K562 (cell line): ENCODE measurements at regions of chrX and their contacts with region 1.

Region 1: DNA sequence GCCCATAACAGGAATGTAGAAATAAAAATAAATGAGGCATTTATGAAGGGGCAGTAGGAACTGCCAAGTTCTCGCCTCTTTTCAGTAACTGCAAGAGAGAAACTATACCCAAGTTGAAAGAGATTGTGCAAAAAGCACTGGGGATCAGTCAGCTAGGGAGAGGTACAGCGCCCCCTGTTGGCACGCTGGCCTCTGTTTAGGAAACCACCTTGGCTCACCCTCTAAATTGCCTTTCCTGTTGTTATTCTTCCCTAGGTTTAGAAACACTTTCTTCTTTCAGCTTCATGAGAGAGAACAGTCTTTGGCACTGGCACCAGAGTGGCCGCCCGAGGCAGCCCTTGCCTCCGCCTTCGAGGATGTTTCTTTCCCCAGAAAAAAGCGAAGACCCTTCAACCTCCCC is 348.5 kb downstream of the MID1IP1 start:
- DNase-seq: peak; percentile 44 to 62 (median 49)
- ATAC-seq: peak; percentile 81
- H3K4me3 ChIP-seq: no peak overlapping the region
- H3K27ac ChIP-seq: no peak overlapping the region
- H3K4me1 ChIP-seq: peaks cover 0 to 10% of the 10 kb centered on the region in 2 experiments; a peak in 3 of 5 replicates
- H3K27me3 ChIP-seq: 0 out of 5 replicates have a peak, but pooled peaks cover 0 to 2% of the 10 kb centered on the region in 2 experiments
- CTCF ChIP-seq: peak; percentile 65 to 68 (median 67)
- EP300 ChIP-seq: no peak
- POLR2A ChIP-seq: no peak
- RAD21 ChIP-seq: peak; percentile 47 to 67

Region 2: GRCh38 chrX:38636949-38637819 is 512.6 kb before region 1 on chrX:
- CTCF ChIA-PET with region 1: no interaction called
- POLR2A ChIA-PET with region 1: no interaction called
- in situ Hi-C with region 1: no loop called
- intact Hi-C with region 1: loop called (anchors 1 kb)
- DNase-seq: no peak
- ATAC-seq: no peak
- H3K4me3 ChIP-seq: no peak overlapping the region
- H3K27ac ChIP-seq: no peak overlapping the region; the same call in 2 of the 3 replicates
- H3K4me1 ChIP-seq: peaks cover 8 to 69% of the 10 kb centered on the region in 2 experiments
- H3K27me3 ChIP-seq: no peaks in the 10 kb centered on the region
- CTCF ChIP-seq: no peak
- EP300 ChIP-seq: no peak
- POLR2A ChIP-seq: no peak
- RAD21 ChIP-seq: no peak

Region 3: DNA sequence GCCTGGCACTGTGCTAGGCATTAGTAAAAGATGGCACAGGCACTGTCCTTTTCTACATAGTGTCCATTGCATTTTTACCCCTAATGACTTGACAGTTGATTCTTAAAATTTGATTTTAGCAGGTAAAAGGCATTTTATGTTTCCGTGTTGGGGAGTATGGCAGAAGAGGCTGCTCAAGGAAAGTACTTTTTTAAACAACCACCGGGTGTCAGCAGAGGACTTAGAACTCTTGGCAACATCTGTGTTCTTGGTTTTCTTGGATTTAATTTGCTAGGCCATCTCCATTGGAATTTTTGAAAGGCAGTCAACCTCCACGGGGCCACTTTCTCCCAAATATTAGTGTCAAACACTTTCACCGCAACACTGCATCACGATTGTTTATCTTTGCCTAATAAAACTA is 485.5 kb before region 1 on chrX:
- CTCF ChIA-PET with region 1: interaction called, 4 read pairs
- POLR2A ChIA-PET with region 1: no interaction called
- in situ Hi-C with region 1: no loop called
- intact Hi-C with region 1: loop called (anchors 1 kb)
- DNase-seq: peak; percentile 33 to 64 (median 38)
- ATAC-seq: peak; percentile 84
- H3K4me3 ChIP-seq: no peak overlapping the region
- H3K27ac ChIP-seq: no peak overlapping the region
- H3K4me1 ChIP-seq: peaks cover 0 to 7% of the 10 kb centered on the region in 2 experiments; a peak in 2 of 5 replicates
- H3K27me3 ChIP-seq: no peaks in the 10 kb centered on the region
- CTCF ChIP-seq: peak; percentile 52 to 59 (median 55); a peak in 5 of 6 replicates
- EP300 ChIP-seq: no peak
- POLR2A ChIP-seq: no peak
- RAD21 ChIP-seq: peak; percentile 63 to 74

Region 4: DNA sequence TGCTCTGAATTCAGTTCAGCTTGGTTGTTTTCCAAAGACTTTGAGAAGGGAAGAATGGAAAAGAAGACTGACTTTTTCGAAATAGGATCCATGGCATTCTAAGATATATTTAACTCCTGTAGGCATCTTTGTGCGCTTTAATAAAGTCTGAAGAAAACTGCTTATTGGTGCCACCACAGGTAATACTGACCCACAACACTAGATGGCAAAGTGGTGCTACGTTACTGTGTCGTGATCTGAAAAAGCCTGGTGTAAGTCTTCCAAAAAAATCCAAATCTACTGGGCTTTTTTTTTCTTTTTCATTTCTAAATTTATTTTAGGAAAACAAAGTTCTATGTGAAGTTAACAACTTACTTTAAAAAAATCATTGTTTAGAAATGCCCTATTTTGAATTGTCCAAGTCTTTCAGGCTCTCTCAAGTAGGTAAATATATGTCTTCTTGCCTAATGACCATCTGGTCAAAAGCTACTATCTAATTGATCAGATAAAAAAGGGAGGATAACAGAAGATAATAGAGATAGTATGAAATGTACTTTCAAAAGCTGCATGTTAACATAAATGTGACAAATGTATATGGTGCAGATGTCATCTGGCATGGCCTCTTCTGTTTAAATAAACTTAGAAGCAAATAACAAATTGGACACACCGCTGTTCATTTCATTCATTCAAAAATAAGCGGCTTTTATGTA is 395.5 kb before region 1 on chrX:
- CTCF ChIA-PET with region 1: interaction called, 6 read pairs
- POLR2A ChIA-PET with region 1: no interaction called
- in situ Hi-C with region 1: loop called (anchors 5 kb)
- intact Hi-C with region 1: loop called (anchors 2 kb)
- DNase-seq: peak; percentile 25 to 65 (median 39)
- ATAC-seq: peak; percentile 86
- H3K4me3 ChIP-seq: no peak overlapping the region
- H3K27ac ChIP-seq: no peak overlapping the region
- H3K4me1 ChIP-seq: no peaks in the 10 kb centered on the region; a peak in 2 of 5 replicates
- H3K27me3 ChIP-seq: no peaks in the 10 kb centered on the region; a peak in 2 of 5 replicates
- CTCF ChIP-seq: peak; percentile 61 to 71 (median 63)
- EP300 ChIP-seq: no peak
- POLR2A ChIP-seq: no peak
- RAD21 ChIP-seq: peak; percentile 78 to 79

Region 5: GRCh38 chrX:38768079-38768478 is 381.7 kb before region 1 on chrX:
- CTCF ChIA-PET with region 1: no interaction called
- POLR2A ChIA-PET with region 1: no interaction called
- in situ Hi-C with region 1: no loop called
- intact Hi-C with region 1: loop called (anchors 1 kb)
- DNase-seq: peak in 1 of 4 experiments; percentile 23
- ATAC-seq: 0 out of 3 replicates have a peak, but pooled peaks have one; percentile 17
- H3K4me3 ChIP-seq: no peak overlapping the region
- H3K27ac ChIP-seq: no peak overlapping the region
- H3K4me1 ChIP-seq: peaks cover 0 to 5% of the 10 kb centered on the region in 2 experiments; a peak in 2 of 5 replicates
- H3K27me3 ChIP-seq: no peaks in the 10 kb centered on the region
- CTCF ChIP-seq: peak; percentile 38 to 62 (median 46); a peak in 4 of 6 replicates
- EP300 ChIP-seq: no peak
- POLR2A ChIP-seq: no peak
- RAD21 ChIP-seq: peak; percentile 51 to 71

Region 6: DNA sequence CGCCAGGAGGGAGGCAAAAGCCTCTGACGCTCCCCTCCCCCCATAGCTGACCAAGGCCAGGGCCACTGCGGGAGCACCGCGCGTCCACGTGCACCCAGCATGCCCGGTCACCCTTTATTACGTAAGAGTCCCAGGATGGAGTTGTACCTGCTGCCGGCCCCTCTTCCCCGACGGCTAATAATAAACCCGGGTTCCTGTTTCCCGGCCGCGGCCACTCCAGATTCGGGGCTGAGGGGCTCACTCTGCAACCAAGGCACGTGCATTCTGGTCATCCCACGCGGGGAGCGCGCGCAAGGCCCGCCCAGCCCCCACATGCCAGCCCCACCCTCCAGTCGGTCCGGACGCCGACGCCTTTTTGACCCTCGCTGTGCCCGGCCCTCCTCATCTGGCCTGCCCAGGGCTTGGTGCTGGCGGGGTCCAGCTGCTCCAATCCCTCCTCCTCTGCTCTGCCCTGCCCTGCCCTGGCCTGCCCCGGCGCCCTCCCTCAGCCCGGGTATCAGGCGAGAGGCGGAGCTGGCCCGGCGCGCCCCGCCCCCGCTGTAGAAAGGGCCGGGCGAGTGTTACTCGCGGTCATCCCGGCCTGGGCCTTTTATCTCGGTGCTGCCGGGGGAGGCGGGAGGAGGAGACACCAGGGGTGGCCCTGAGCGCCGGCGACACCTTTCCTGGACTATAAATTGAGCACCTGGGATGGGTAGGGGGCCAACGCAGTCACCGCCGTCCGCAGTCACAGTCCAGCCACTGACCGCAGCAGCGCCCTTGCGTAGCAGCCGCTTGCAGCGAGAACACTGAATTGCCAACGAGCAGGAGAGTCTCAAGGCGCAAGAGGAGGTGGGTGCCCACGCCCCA is 346.0 kb before region 1 on chrX:
- CTCF ChIA-PET with region 1: no interaction called
- POLR2A ChIA-PET with region 1: interaction called, 3 read pairs
- in situ Hi-C with region 1: no loop called
- intact Hi-C with region 1: loop called (anchors 5 kb)
- DNase-seq: peak; percentile 75 to 91 (median 84)
- ATAC-seq: peak; percentile 73
- H3K4me3 ChIP-seq: peak overlapping the region; percentile 86
- H3K27ac ChIP-seq: peak overlapping the region; percentile 96
- H3K4me1 ChIP-seq: peaks cover 19 to 34% of the 10 kb centered on the region in 2 experiments
- H3K27me3 ChIP-seq: no peaks in the 10 kb centered on the region
- CTCF ChIP-seq: 0 out of 6 replicates have a peak, but pooled peaks of 1 of the 3 experiments have one; percentile 1
- EP300 ChIP-seq: peak; percentile 15; the same call in 1 of the 2 replicates
- POLR2A ChIP-seq: peak; percentile 96
- RAD21 ChIP-seq: 0 out of 4 replicates have a peak, but pooled peaks of 1 of the 2 experiments have one; percentile 6

Region 7: DNA sequence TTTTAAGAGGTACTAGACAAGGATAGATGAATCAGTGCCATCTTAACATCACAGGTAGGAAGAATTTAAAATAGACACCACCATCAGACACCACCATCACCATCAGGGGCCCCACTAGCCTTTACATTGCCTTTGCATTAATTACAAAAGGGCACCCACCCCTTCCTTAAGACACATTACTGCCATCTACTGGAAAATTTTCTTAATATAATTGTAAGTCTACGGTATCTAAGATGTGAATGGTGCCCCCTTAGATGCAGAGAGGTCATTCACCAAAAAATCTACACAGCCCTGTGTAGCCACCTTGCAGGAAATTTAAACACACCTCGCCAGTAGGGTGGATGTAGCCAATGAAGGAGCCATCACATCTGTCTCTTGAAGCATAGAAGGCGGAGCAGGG is 164.4 kb before region 1 on chrX:
- CTCF ChIA-PET with region 1: no interaction called
- POLR2A ChIA-PET with region 1: no interaction called
- in situ Hi-C with region 1: no loop called
- intact Hi-C with region 1: loop called (anchors 2 kb)
- DNase-seq: peak; percentile 9 to 36 (median 18)
- ATAC-seq: peak; percentile 81
- H3K4me3 ChIP-seq: no peak overlapping the region
- H3K27ac ChIP-seq: no peak overlapping the region
- H3K4me1 ChIP-seq: peaks cover 0 to 7% of the 10 kb centered on the region in 2 experiments; a peak in 3 of 5 replicates
- H3K27me3 ChIP-seq: no peaks in the 10 kb centered on the region
- CTCF ChIP-seq: peak; percentile 25 to 51 (median 50); a peak in 3 of 6 replicates
- EP300 ChIP-seq: no peak
- POLR2A ChIP-seq: no peak
- RAD21 ChIP-seq: peak; percentile 44 to 66